Right ventricle myocardium superior (tissue), 1 donor: ENCODE measurements at regions of chr1 and their contacts with region 1.

Region 1: DNA sequence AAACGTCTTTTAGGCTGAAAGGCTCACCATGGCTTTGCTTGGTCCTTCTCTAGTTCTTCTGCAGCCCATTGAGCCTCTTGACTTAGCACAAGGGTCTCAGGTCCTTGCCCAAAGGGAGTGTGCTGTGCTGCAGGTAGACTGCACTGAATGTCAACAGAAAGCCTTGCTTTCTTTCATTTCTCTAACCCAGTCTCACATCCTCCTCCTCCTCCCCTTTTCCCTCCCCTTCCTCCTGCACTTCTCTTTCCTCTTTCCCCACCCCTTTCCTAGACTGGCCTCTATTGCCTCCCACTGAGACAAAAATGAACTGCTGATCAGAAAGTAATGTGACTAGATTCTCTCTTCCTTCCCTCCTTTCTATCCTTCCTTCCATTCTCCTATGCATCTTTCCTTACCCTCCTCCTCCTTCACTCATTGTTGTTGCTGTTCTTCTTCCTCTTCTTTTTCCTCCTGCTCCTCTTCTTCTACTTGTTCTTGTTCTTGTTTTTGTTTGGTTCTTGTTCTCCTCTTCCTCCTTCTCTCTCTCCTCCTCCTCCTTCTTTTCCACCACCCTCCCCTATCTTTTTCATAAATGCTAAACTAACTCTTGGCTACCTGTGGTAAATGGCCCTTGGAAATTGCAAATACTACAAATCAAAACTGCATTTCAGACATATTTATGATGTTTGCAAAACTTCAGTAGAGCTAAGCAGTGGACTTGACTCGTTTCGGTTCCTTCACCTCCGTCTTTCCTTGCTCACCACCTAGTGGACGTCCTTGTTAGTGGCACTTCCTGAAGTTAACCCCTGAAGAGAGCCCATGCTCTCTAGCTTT is at the start of gene SELL:
- DNase-seq: peak; percentile 46
- ATAC-seq: peak; percentile 98
- total RNA-seq, gene SELL: 0.89 TPM

Region 2: DNA sequence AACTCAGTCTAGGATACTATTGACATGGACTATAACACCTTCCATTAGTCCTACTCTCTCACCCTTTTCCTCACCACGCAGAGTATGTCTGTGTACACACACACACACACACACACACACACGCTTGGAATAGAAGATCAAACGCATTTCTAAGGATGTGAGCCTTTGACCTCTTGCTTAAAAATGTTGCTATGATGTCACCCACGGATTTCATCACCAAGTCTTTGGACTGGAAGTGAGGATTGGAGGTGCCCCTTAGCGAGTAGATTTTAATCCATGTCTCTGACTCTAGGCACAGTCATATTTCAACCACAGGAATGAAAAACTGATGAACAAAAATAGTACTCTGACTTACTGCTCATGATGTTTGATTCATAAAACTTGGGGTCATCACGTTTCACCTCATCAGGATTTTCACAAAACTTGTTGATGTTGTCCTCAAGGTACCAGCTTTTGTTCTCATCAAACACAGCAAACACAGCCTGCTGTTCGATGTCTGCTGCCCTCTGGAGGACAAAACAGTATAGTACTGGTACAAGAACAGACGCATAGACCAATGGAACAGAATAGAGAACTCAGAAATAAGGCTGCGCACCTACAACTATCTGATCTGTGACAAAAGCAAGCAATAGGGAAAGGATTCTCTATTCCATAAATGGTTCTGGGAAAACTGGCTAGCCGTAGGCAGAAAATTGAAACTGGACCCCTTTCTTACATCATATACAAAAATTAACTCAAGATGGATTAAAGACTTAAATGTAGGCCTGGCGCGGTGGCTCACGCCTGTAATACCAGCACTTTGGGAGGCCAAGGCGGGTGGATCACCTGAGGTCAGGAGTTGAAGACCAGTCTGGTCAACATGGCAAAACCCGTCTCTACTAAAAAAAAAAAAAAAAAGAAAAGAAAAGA is 165.3 kb before region 1 on chr1:
- intact Hi-C with region 1: loop called (anchors 5 kb)
- DNase-seq: no peak
- ATAC-seq: peak; percentile 83

Region 3: GRCh38 chr1:169572187-169572586 is 139.5 kb before region 1 on chr1:
- intact Hi-C with region 1: no loop called
- DNase-seq: no peak
- ATAC-seq: peak; percentile 24

Region 4: GRCh38 chr1:169601093-169601881 is 110.4 kb before region 1 on chr1:
- intact Hi-C with region 1: loop called (anchors 5 kb)
- DNase-seq: no peak
- ATAC-seq: peak; percentile 53

Region 5: GRCh38 chr1:169809370-169810095 is 97.9 kb after region 1 on chr1:
- intact Hi-C with region 1: loop called (anchors 10 kb)
- DNase-seq: no peak
- ATAC-seq: no peak

Region 6: GRCh38 chr1:170063109-170063826 is 351.6 kb after region 1 on chr1:
- intact Hi-C with region 1: no loop called
- DNase-seq: no peak
- ATAC-seq: no peak